ENCODE measurements at regions of chr9 and their contacts with region 1.

Region 1: GRCh38 chr9:124257844-124258606 is at the start of gene NEK6:
- DNase-seq: peak; percentile 47
- H3K4me3 ChIP-seq: peak within 1 kb of the TSS; percentile 76 to 87 (median 81)
- H3K27ac ChIP-seq: peak within 1 kb of the TSS; percentile 77
- H3K4me1 ChIP-seq: peaks cover 37% of the 10 kb centered on the region
- H3K27me3 ChIP-seq: no peaks in the 10 kb centered on the region
- CTCF ChIP-seq: no peak
- total RNA-seq, gene NEK6: 41.3 to 41.7 TPM

Region 2: DNA sequence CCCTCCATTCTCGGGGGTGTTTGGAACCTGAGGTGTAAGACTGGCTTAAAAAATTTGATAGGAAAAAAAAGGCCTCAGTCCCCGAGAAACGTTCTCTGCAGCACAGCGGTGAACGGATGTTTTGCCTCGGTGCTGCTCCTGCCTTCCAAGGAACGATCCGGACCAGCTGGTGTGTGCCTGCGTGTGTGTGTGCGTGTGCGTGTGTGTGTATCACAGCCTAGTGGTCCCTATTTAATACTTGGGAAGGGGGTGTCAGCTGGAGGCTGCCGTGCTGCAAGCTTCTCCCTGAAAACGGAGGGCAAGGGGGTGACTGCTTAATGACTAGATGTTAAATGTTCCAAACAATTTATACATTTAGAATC is 169.6 kb before region 1 on chr9:
- CTCF ChIA-PET with region 1: no interaction called
- dilution Hi-C with region 1: no loop called
- in situ Hi-C with region 1: no loop called
- intact Hi-C with region 1: no loop called
- DNase-seq: no peak
- H3K4me3 ChIP-seq: no peak overlapping the region
- H3K27ac ChIP-seq: no peak overlapping the region
- H3K4me1 ChIP-seq: no peaks in the 10 kb centered on the region
- H3K27me3 ChIP-seq: peaks cover 2% of the 10 kb centered on the region
- CTCF ChIP-seq: no peak

Region 3: GRCh38 chr9:124297553-124297905 is 39.5 kb after region 1 on chr9:
- CTCF ChIA-PET with region 1: no interaction called
- dilution Hi-C with region 1: no loop called
- in situ Hi-C with region 1: no loop called
- intact Hi-C with region 1: loop called (anchors 1 kb)
- DNase-seq: peak; percentile 84
- H3K4me3 ChIP-seq: no peak overlapping the region
- H3K27ac ChIP-seq: no peak overlapping the region
- H3K4me1 ChIP-seq: peaks cover 73% of the 10 kb centered on the region
- H3K27me3 ChIP-seq: no peaks in the 10 kb centered on the region
- CTCF ChIP-seq: no peak

Region 4: GRCh38 chr9:124320062-124320973 is 62.3 kb after region 1 on chr9:
- CTCF ChIA-PET with region 1: no interaction called
- dilution Hi-C with region 1: no loop called
- in situ Hi-C with region 1: no loop called
- intact Hi-C with region 1: loop called (anchors 5 kb)
- DNase-seq: peak; percentile 30
- H3K4me3 ChIP-seq: no peak overlapping the region
- H3K27ac ChIP-seq: no peak overlapping the region
- H3K4me1 ChIP-seq: no peaks in the 10 kb centered on the region
- H3K27me3 ChIP-seq: no peaks in the 10 kb centered on the region
- CTCF ChIP-seq: peak; percentile 95 to 97

Region 5: GRCh38 chr9:124583128-124583527 is 325.1 kb after region 1 on chr9:
- CTCF ChIA-PET with region 1: no interaction called
- dilution Hi-C with region 1: no loop called
- in situ Hi-C with region 1: no loop called
- intact Hi-C with region 1: no loop called
- DNase-seq: no peak
- H3K4me3 ChIP-seq: no peak overlapping the region
- H3K27ac ChIP-seq: no peak overlapping the region
- H3K4me1 ChIP-seq: no peaks in the 10 kb centered on the region
- H3K27me3 ChIP-seq: no peaks in the 10 kb centered on the region
- CTCF ChIP-seq: no peak